ENCODE measurements at regions of chr4 and their contacts with region 1.

Region 1: DNA sequence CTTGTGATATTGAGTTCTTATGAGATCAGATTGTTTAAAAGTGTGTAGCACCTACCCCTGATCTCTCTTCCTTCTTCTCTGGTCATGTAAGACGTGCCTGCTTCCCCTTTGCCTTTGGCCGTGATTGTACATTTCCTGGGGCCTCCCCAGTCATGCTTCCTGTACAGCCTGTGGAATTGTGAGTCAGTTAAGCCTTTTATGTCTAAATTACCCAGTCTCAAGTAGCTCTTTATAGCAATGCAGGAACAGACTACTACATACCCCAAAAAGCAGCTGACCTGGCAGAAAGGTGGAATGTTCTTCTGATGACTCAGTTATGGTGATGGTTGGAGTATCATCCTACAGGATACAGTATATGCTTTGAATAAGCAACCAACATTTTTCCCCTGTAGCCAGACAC is 11.4 kb upstream of the MCUB start:
- DNase-seq: no peak
- ATAC-seq: peak; percentile 39
- H3K4me3 ChIP-seq: no peak overlapping the region
- H3K27ac ChIP-seq: peak overlapping the region in 1 of 4 donors; percentile 38
- H3K4me1 ChIP-seq: peaks cover 0 to 2% of the 10 kb centered on the region in 2 donors
- H3K27me3 ChIP-seq: no peaks in the 10 kb centered on the region
- CTCF ChIP-seq: no peak
- POLR2A ChIP-seq: no peak

Region 2: GRCh38 chr4:108650212-108651013 is 898.2 kb before region 1 on chr4 and contains the start of gene OSTC:
- in situ Hi-C with region 1: loop called in 1 of 4 experiments (anchors 25 kb)
- intact Hi-C with region 1: no loop called
- DNase-seq: peak; percentile 87 to 91
- ATAC-seq: peak; percentile 99
- H3K4me3 ChIP-seq: peak within 1 kb of the TSS; percentile 73 to 95 (median 90)
- H3K27ac ChIP-seq: peak within 1 kb of the TSS; percentile 87 to 90 (median 88)
- H3K4me1 ChIP-seq: peaks cover 14 to 21% of the 10 kb centered on the region in 2 donors
- H3K27me3 ChIP-seq: no peaks in the 10 kb centered on the region
- CTCF ChIP-seq: peak in 1 of 5 experiments; percentile 20
- POLR2A ChIP-seq: peak; percentile 15 to 61
- total RNA-seq, gene OSTC: 15.5 to 25.0 (median 23.2) TPM

Region 3: DNA sequence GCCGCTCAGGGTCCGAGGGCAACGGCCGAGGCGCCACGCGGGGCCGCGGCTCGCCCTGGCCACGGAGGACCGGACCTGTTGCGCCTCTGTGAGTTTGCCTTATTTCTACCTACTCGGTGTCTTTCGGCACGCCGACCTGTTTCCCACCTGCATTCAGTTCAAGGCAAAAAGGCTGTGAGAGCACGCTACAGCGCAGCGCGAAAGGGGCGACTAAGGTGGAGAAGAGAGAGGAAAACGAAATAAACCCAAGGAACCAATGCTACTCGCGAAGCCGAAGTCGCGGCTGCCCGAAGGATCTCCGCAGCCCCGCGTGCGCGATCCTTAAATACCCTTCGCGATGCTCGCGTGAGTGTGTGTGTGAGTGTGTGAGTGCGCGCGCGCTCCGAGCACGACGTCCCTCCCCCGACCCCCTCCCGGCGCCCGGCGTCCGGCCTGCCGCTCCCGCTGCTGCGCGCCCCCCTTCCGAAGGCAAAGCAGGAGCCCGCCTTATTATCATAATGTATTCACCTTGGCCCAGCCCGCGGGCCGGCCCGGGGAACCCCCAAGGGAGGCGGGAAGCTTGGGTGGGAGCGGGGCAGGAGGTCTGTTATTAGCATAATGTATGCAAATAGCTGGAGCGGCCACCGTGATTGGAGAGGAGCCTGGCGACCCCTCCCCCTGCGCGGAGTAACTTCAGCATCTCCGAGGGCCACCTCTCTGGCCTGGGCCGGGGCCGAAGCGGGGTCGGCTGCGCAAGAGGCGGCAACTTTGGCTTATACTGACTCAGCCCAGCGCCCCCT is 246.1 kb before region 1 on chr4 and contains the start of gene COL25A1:
- in situ Hi-C with region 1: no loop called
- intact Hi-C with region 1: no loop called
- DNase-seq: no peak
- ATAC-seq: peak; percentile 41 to 51
- H3K4me3 ChIP-seq: peak within 1 kb of the TSS; percentile 57 to 73 (median 65)
- H3K27ac ChIP-seq: peak within 1 kb of the TSS in 1 of 4 donors; percentile 23
- H3K4me1 ChIP-seq: peaks cover 16 to 17% of the 10 kb centered on the region in 2 donors
- H3K27me3 ChIP-seq: peaks cover 10 to 24% (median 24%) of the 10 kb centered on the region in 3 donors
- CTCF ChIP-seq: no peak
- POLR2A ChIP-seq: no peak
- total RNA-seq, gene COL25A1: 0.27 to 2.0 (median 0.85) TPM in 3 of 4 donors, not detected in the other

Measured in gastrocnemius medialis (tissue), 4 donors.